ENCODE measurements at regions of chr1 and their contacts with region 1.

Region 1: GRCh38 chr1:8314346-8315280 is 3.3 kb upstream of the SLC45A1 start:
- DNase-seq: peak; percentile 24
- H3K4me3 ChIP-seq: no peak overlapping the region
- CTCF ChIP-seq: peak; percentile 94

Region 2: DNA sequence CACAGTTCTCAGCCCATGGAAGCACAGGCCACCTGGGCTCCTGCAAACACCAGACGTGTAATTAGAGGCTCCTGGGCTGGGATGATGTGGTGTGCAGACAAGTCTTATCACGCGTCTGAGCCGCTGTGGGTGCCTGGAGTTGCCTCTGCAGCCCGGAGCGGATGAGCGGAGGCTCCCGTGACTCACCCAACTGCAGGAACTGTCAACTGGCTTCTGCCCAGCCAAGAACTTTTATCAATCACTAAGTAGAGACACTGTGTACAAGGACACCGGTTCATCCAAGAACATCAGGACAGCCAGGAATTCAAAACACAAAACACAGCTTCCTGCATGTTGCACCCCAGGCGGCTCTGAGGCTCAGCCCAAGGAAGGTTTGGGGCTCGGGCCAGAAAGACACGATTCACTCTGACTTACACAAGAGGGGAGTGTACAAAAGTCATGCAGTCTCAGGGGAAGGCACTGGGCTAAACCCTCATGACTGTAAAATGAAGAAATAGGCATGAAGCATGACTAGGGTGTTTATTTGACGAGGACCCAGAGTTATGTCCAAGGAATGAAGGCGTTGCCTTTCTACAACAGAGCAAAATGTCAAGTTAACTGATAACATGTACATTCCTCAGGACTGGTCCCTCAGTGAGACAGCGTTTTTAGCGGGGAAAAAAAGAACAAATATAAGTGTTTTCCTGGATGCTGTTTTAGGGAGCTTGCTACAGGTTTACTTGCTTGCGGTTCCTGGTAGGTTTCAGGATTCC is 309.6 kb before region 1 on chr1:
- CTCF ChIA-PET with region 1: interaction called, 321 read pairs
- POLR2A ChIA-PET with region 1: interaction called, 4 read pairs
- DNase-seq: peak; percentile 89
- H3K4me3 ChIP-seq: no peak overlapping the region
- CTCF ChIP-seq: no peak

Region 3: GRCh38 chr1:8026153-8026975 is 288.2 kb before region 1 on chr1 and contains the start of gene ERRFI1:
- CTCF ChIA-PET with region 1: interaction called, 321 read pairs
- POLR2A ChIA-PET with region 1: interaction called, 7 read pairs
- DNase-seq: no peak
- H3K4me3 ChIP-seq: peak within 1 kb of the TSS; percentile 80
- CTCF ChIP-seq: no peak

Region 4: GRCh38 chr1:8077120-8077573 is 237.5 kb before region 1 on chr1:
- CTCF ChIA-PET with region 1: interaction called, 10 read pairs
- POLR2A ChIA-PET with region 1: no interaction called
- DNase-seq: no peak
- H3K4me3 ChIP-seq: no peak overlapping the region
- CTCF ChIP-seq: no peak

Region 5: GRCh38 chr1:8302081-8302956 is 12.3 kb before region 1 on chr1:
- CTCF ChIA-PET with region 1: interaction called, 15 read pairs
- POLR2A ChIA-PET with region 1: no interaction called
- DNase-seq: no peak
- H3K4me3 ChIP-seq: no peak overlapping the region
- CTCF ChIP-seq: no peak

Region 6: GRCh38 chr1:8357329-8358101 is 42.9 kb after region 1 on chr1:
- CTCF ChIA-PET with region 1: no interaction called
- POLR2A ChIA-PET with region 1: no interaction called
- DNase-seq: no peak
- H3K4me3 ChIP-seq: no peak overlapping the region
- CTCF ChIP-seq: no peak

Region 7: GRCh38 chr1:8560611-8561544 is 246.3 kb after region 1 on chr1:
- CTCF ChIA-PET with region 1: no interaction called
- POLR2A ChIA-PET with region 1: no interaction called
- DNase-seq: no peak
- H3K4me3 ChIP-seq: no peak overlapping the region
- CTCF ChIP-seq: peak; percentile 71

Region 8: DNA sequence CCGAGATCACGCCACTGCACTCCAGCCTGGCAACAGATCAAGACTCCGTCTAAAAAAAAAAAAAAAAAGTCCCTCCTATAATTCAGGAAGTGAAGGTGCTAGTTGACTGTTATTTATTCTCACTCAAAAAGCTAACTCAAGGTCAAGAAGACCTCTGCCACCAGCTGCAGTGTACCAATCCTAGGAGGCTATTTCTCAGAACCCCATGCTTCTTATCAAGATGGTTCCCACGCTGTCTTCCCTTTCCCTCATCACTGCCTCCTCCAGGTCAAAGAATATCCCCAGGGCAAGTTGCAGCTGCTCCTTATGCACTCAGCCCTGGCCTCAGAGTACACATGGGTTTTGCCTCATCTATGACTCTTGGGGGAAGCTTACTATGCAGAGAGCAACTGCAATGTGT is 449.3 kb after region 1 on chr1:
- CTCF ChIA-PET with region 1: no interaction called
- POLR2A ChIA-PET with region 1: no interaction called
- DNase-seq: no peak
- H3K4me3 ChIP-seq: no peak overlapping the region
- CTCF ChIP-seq: no peak